ENCODE measurements at regions of chr22 and their contacts with region 1.

Region 1: DNA sequence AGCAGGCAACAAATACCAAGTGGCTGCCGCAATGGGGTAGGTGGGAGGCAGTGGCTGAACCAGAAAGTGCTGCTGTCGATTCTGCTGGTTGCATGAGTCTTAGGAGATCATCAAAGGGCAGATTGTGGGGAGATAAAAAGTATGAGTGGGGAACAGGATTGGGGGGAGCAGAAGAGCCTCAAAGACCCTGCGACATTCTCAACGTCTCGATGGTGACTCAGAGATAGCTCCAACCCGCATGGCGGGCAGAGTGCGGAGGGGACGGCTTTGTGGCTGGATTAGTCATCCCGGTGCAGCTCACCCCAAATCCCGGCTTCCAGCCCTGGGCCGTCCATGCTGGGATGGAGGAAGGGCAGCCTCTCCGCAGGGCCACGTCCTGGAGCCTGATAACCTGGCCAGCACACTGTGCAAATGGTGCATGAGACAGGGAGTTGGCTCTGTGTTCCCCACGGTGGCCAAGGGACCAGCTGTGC is 11.6 kb upstream of the RTN4R start:
- DNase-seq: no peak
- ATAC-seq: no peak
- H3K4me3 ChIP-seq: no peak overlapping the region
- H3K27ac ChIP-seq: no peak overlapping the region
- H3K4me1 ChIP-seq: no peaks in the 10 kb centered on the region
- H3K27me3 ChIP-seq: no peaks in the 10 kb centered on the region
- CTCF ChIP-seq: no peak

Region 2: GRCh38 chr22:20156611-20157429 is 122.9 kb before region 1 on chr22:
- intact Hi-C with region 1: loop called (anchors 10 kb)
- DNase-seq: peak; percentile 85
- ATAC-seq: peak; percentile 83
- H3K4me3 ChIP-seq: no peak overlapping the region
- H3K27ac ChIP-seq: no peak overlapping the region
- H3K4me1 ChIP-seq: no peaks in the 10 kb centered on the region
- H3K27me3 ChIP-seq: peaks cover 20% of the 10 kb centered on the region
- CTCF ChIP-seq: peak; percentile 99

Region 3: DNA sequence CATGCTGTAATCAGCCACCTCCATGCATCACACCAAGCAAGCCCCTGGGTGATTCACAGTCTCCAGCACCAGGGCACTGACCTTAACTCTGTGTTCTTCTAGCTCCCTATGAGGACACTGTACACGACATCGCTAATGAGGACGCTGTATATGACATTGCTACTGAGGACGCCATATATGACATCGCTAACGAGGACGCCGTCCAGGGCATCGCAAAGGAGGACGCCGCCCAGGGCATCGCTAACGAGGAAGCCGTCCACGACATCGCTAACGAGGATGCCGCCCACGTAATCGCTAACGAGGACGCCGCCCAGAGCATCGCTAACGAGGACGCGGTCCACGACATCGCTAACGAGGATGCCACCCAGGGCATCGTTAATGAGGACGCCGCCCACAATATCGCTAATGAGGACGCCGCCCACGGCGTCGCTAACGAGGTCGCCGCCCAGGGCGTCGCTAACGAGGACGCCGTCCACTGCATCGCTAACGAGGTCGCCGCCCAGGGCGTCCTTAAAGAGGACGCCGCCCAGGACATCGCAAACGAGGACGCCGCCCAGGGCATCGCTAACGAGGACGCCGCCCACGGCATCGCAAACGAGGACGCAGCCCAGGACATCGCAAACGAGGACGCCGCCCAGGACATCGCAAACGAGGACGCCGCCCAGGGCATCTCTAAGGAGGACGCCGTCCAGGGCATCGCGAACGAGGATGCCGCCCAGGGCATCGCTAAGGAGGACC is 74.7 kb after region 1 on chr22:
- intact Hi-C with region 1: no loop called
- DNase-seq: no peak
- ATAC-seq: no peak
- H3K4me3 ChIP-seq: no peak overlapping the region
- H3K27ac ChIP-seq: no peak overlapping the region
- H3K4me1 ChIP-seq: no peaks in the 10 kb centered on the region
- H3K27me3 ChIP-seq: no peaks in the 10 kb centered on the region
- CTCF ChIP-seq: no peak

Region 4: GRCh38 chr22:20396639-20397038 is 116.9 kb after region 1 on chr22:
- intact Hi-C with region 1: no loop called
- DNase-seq: no peak
- ATAC-seq: no peak
- H3K4me3 ChIP-seq: no peak overlapping the region
- H3K27ac ChIP-seq: no peak overlapping the region
- H3K4me1 ChIP-seq: peaks cover 18% of the 10 kb centered on the region
- H3K27me3 ChIP-seq: no peaks in the 10 kb centered on the region
- CTCF ChIP-seq: no peak

Measured in lower lobe of right lung (tissue), 2 donors.